ENCODE measurements at regions of chr4 and their contacts with region 1.

Region 1: DNA sequence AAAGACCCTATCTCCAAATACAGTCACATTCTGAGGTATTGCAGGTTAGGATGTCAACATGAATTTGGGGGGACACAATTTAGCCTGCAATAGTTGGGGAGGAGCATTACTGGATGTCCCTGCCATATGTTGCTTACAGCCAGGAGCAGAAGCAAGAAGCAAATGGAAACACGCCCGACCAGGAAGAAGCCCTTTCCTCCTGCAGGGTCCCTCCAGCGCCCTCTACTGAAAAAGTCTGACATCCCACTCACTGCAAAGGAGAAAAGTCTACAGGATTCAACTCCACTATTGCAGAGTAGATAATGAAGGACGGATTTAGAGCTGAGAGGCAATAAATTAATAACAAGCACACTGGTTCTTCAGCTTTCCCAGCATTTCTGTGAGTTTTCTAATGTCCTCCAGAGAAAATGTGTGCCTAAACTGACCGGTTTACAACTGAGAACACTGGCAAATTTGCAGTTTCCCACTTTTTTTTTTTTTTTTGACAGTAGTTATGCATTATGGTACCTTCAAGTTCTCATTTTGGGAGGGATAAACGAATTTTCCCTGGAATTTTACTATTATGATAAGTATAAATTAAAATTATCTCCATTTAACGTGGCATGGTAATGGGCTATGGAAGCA is 31.7 kb downstream of the COQ2 start:
- DNase-seq: peak; percentile 59
- H3K4me3 ChIP-seq: no peak overlapping the region
- H3K27ac ChIP-seq: no peak overlapping the region
- H3K4me1 ChIP-seq: no peaks in the 10 kb centered on the region
- H3K27me3 ChIP-seq: no peaks in the 10 kb centered on the region
- CTCF ChIP-seq: peak in 2 of 4 experiments; percentile 39 to 61
- POLR2A ChIP-seq: no peak

Region 2: DNA sequence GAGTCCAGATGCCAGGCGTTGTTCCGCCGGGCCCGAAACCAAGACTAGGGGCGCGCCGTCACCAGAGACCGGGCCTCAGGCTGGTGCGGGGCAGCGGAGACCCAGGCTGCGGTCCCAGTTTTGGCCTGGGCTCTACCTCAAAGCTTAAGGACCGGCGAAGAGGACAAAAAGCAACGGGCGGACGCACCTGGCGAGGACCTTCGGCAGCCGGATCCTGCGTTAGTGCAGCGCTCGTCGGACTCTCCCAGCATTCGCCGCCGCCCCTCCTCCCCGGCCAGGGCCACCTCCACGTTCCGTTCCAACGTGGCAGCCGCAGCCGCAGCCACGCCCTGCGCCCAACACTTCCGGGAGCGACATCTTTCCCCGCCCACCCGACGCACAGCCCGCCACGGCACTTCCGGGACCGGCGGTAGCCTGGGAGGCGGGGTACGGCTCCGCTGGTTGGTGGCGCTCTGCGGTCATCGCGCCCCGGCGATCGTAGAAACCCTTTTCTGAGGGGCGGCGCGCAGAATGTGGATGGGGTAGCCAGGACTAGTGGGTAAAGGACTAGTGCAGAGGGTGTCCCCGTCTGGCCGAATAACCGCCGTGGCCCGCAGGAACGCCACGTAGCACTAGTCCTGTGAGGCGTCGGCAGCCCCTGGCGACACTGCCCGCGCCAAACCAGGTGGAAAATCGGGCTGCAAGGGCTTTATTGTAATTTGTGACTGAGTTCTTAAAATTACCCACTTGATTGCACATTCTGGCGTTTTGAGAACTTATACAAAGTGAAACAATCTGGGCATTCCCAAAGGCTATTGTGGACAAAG is 361.8 kb before region 1 on chr4 and contains the start of gene SEC31A:
- intact Hi-C with region 1: loop called (anchors 10 kb)
- DNase-seq: peak; percentile 96
- H3K4me3 ChIP-seq: peak within 1 kb of the TSS; percentile 56 to 79
- H3K27ac ChIP-seq: peak within 1 kb of the TSS; percentile 93 to 98
- H3K4me1 ChIP-seq: no peaks in the 10 kb centered on the region
- H3K27me3 ChIP-seq: no peaks in the 10 kb centered on the region
- CTCF ChIP-seq: peak in 2 of 4 experiments; percentile 11 to 31
- POLR2A ChIP-seq: peak; percentile 95
- total RNA-seq, gene SEC31A: 191 to 196 TPM

Region 3: DNA sequence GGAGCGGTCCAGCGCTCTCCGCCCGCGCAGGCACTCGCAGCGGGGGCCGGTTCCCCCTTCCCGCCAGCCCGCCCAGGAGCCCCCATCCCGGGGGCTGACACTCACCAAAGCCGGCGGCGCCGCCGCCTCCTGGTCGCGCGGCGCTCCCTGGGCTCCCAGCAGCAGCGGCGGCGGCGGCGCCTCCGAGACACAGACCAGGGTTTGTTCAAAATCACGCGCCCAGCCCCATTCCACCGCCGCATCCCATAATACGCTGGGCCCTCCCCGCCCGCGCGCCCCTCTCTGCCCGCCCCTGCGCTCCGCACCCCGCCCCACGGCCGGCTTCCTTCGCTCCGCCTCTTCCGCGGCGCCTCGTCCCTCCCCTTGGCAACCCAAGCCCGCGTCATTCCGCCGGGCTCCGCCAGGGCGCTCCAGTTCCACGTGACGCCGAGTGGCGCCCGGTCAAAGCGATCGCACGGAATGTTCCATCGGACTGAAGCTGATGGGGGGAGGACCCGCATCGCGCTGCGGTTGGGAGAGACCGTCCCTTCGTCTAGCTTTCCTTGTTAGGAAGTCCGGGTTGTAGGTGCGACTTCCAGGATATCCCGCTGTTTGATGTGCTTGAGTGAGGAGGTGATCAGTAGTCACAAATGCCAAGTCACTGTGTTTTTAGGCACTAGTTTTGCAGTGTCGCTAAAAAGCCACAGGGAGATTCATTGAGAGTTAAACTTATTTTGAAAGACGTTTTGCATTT is 240.0 kb before region 1 on chr4:
- intact Hi-C with region 1: loop called (anchors 5 kb)
- DNase-seq: peak; percentile 95
- H3K4me3 ChIP-seq: peak overlapping the region; percentile 61 to 82
- H3K27ac ChIP-seq: peak overlapping the region; percentile 88 to 90
- H3K4me1 ChIP-seq: no peaks in the 10 kb centered on the region
- H3K27me3 ChIP-seq: no peaks in the 10 kb centered on the region
- CTCF ChIP-seq: peak; percentile 35 to 93 (median 70)
- POLR2A ChIP-seq: peak; percentile 72

Region 4: DNA sequence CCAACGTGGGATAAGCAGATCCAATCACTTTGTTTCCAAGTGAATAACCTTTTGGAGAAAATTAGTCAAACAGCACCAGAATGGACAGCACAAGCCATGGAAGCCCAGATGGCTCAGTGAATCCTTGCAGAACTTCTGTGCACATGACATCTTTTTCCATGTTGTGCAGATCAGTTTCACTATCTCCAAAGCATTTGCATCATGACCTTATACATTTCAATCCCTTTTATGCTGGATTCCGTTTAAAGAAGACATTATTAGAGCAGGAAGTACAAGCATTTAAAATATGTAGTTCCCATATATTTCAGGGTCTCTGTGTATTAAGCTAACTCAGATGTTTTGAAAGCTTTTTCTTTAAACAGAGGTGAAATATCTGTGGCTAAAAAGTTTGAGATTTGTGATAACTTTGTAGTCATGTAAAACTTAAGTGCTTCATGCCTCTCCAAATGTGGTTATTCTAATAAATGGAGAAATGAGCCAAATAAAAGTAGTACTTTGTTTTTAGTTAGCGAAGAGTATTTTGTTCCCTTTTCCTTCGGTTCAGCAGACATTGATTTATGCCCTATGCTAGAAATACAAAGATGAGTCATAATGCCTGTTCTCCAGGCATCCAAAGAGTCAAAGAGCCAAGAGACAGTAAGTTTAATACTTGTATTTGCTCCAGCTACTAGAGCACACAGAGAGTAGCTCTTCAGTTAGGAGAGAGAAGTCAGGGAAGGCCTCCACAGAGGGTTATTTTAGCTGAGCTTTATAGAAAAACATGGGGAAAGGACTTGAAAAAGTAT is 177.4 kb before region 1 on chr4:
- intact Hi-C with region 1: loop called (anchors 5 kb)
- DNase-seq: no peak
- H3K4me3 ChIP-seq: no peak overlapping the region
- H3K27ac ChIP-seq: peak overlapping the region in 1 of 2 donors; percentile 33
- H3K4me1 ChIP-seq: no peaks in the 10 kb centered on the region
- H3K27me3 ChIP-seq: no peaks in the 10 kb centered on the region
- CTCF ChIP-seq: no peak
- POLR2A ChIP-seq: no peak

Region 5: GRCh38 chr4:83548151-83548905 is 295.4 kb after region 1 on chr4:
- intact Hi-C with region 1: no loop called
- DNase-seq: peak; percentile 73
- H3K4me3 ChIP-seq: no peak overlapping the region
- H3K27ac ChIP-seq: no peak overlapping the region
- H3K4me1 ChIP-seq: no peaks in the 10 kb centered on the region
- H3K27me3 ChIP-seq: no peaks in the 10 kb centered on the region
- CTCF ChIP-seq: no peak
- POLR2A ChIP-seq: no peak

Measured in prostate gland (tissue), 2 donors.